ENCODE measurements at regions of chr11 and their contacts with region 1.

Region 1: DNA sequence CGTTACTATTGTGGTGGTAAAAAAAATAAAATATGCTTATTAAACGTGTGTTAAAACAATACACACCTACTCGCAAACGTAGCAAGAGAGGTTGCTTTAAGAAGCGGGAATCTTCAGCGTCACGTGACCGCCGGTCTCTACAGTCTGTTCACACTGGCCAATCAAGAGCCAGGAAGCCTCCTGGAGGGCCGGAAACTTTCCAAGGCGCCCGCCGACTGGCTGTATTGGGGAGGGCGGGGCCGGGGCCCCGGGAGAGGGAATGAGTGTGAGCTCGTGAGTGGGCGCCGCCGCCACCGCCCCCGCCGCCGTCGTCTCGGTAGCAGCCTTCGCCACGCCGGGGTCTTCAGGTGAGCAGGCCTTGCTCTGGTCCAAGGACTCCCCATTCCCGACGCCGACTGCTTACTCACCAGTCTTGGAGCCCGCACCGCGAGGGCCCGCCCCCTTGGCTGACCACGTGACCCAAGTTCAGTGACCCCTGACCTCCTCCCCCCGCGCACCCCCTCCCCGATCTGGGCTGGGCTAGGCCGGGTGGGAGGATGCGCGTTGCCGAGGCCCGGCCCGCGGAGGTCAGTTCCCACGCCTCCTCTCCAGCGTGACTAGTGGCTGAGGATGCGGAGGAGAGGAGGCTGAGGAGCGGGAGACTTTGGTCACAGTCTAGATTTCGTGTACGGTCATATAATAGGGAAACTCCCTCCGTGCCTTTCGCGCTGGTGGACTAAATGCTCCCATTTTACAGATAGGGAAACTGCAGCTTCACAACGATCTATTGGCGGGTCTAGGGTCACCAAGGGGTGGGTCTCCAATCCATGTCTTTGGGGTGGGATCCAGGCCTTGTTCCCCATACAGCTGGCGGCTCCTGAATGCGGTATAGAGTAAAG is at the start of gene TAF6L:
- DNase-seq: peak; percentile 98
- H3K4me3 ChIP-seq: peak within 1 kb of the TSS; percentile 56 to 74
- H3K27ac ChIP-seq: peak within 1 kb of the TSS; percentile 85 to 88
- H3K4me1 ChIP-seq: peaks cover 0 to 15% of the 10 kb centered on the region in 2 experiments; a peak in 1 of 4 replicates
- H3K27me3 ChIP-seq: no peaks in the 10 kb centered on the region
- CTCF ChIP-seq: no peak
- EP300 ChIP-seq: no peak
- RAD21 ChIP-seq: no peak
- polyA plus RNA-seq, gene TAF6L: 33.6 and 34.4 TPM in 2 replicates

Region 2: GRCh38 chr11:62678770-62679696 is 92.3 kb before region 1 on chr11 and contains the start of gene UBXN1:
- CTCF ChIA-PET with region 1: interaction called, 10 read pairs
- POLR2A ChIA-PET with region 1: no interaction called
- DNase-seq: peak; percentile 93
- H3K4me3 ChIP-seq: peak within 1 kb of the TSS; percentile 79 to 98
- H3K27ac ChIP-seq: peak within 1 kb of the TSS; percentile 70 to 77; a peak in 3 of 4 replicates
- H3K4me1 ChIP-seq: peaks cover 11 to 15% of the 10 kb centered on the region in 2 experiments; a peak in 3 of 4 replicates
- H3K27me3 ChIP-seq: no peaks in the 10 kb centered on the region
- CTCF ChIP-seq: no peak
- EP300 ChIP-seq: peak in 1 of 2 experiments; percentile 15; a peak in 2 of 4 replicates
- RAD21 ChIP-seq: no peak
- polyA plus RNA-seq, gene UBXN1: 202 and 256 TPM in 2 replicates

Region 3: DNA sequence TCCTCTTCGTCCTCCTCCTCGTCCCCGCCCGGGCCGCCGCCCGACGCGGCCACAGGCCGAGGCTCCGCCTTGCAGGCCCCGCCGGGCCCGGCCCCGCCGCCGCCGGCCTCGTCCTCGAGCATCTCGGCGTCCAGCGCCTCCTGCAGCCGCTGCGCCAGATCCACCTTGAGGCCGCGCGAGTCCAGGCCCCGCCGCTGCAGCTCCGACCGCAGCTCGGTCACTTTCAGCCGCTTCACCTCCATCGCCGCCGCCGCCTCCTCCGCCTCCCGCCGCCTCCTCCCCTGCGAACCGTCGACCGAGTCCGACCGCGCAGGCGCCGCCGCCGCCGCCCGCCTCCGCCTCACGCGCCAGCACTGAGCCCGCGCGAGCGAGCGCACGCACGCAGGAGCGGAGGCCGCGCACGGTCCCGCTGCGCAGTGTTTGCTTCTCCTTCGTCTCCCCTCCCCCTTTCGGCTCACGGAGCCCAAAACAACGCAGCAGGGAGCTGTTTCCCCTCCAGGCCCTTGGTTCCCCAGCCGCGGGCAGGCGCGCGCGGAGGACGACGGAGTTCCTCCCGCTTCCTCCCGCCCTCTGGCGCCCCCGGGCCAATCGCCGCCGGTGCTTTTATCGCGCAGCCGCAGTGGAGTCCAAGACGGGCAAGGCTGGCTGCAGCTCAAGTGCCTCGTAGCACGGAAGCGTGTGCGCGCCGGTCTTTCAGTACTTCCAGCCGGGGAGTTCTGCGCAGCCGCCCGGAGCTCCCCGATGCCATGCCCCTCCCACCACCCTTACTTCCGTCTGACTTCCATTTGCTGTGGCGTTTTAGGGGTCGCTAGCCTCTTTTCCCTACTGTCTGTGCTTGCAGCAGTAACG is 44.2 kb before region 1 on chr11 and contains the start of gene HNRNPUL2:
- CTCF ChIA-PET with region 1: interaction called, 14 read pairs
- POLR2A ChIA-PET with region 1: interaction called, 12 read pairs
- DNase-seq: peak; percentile 95
- H3K4me3 ChIP-seq: peak within 1 kb of the TSS; percentile 89 to 92
- H3K27ac ChIP-seq: peak within 1 kb of the TSS; percentile 99
- H3K4me1 ChIP-seq: peaks cover 12 to 21% of the 10 kb centered on the region in 2 experiments; a peak in 3 of 4 replicates
- H3K27me3 ChIP-seq: no peaks in the 10 kb centered on the region
- CTCF ChIP-seq: no peak; the same call in 1 of the 2 replicates
- EP300 ChIP-seq: no peak
- RAD21 ChIP-seq: no peak
- polyA plus RNA-seq, gene HNRNPUL2: 31.0 and 33.5 TPM in 2 replicates

Region 4: DNA sequence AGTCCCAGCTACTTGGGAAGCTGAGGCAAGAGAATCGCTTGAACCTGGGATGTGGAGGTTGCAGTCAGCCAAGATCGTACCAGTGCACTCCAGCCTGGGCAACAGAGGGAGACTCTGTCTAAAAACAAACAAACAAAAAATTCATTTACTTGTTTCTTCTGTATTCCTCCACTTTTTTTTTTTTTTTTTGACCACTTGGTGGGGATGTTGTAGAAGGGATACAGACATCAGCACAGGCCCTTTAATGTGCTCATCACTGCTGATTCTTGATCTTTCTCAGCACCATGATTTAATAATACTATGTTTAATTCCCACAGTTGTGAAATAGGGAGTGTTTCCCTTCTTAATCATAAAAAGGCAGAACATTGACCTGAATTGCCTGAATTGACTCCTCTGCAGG is 38.6 kb before region 1 on chr11:
- CTCF ChIA-PET with region 1: interaction called, 14 read pairs
- POLR2A ChIA-PET with region 1: interaction called, 12 read pairs
- DNase-seq: no peak
- H3K4me3 ChIP-seq: no peak overlapping the region
- H3K27ac ChIP-seq: no peak overlapping the region
- H3K4me1 ChIP-seq: peaks cover 3 to 6% of the 10 kb centered on the region in 2 experiments; a peak in 2 of 4 replicates
- H3K27me3 ChIP-seq: no peaks in the 10 kb centered on the region
- CTCF ChIP-seq: peak; percentile 47
- EP300 ChIP-seq: no peak
- RAD21 ChIP-seq: peak; percentile 60

Region 5: GRCh38 chr11:62753736-62754603 is 17.4 kb before region 1 on chr11 and contains the start of gene ZBTB3:
- CTCF ChIA-PET with region 1: interaction called, 7 read pairs
- POLR2A ChIA-PET with region 1: interaction called, 16 read pairs
- DNase-seq: peak; percentile 90
- H3K4me3 ChIP-seq: peak within 1 kb of the TSS; percentile 66 to 69
- H3K27ac ChIP-seq: peak within 1 kb of the TSS; percentile 85 to 95
- H3K4me1 ChIP-seq: peaks cover 6 to 11% of the 10 kb centered on the region in 2 experiments; a peak in 3 of 4 replicates
- H3K27me3 ChIP-seq: no peaks in the 10 kb centered on the region
- CTCF ChIP-seq: no peak
- EP300 ChIP-seq: no peak
- RAD21 ChIP-seq: no peak
- polyA plus RNA-seq, gene ZBTB3: 2.1 and 3.3 TPM in 2 replicates

Measured in SK-N-SH (cell line).